ENCODE measurements at regions of chr17 and their contacts with region 1.

Region 1: GRCh38 chr17:79796763-79797491 is at the start of gene CBX8:
- DNase-seq: peak; percentile 99
- H3K4me3 ChIP-seq: peak within 1 kb of the TSS; percentile 41 to 79 (median 43)
- H3K27ac ChIP-seq: peak within 1 kb of the TSS; percentile 36
- H3K4me1 ChIP-seq: peaks cover 19% of the 10 kb centered on the region
- H3K27me3 ChIP-seq: peaks cover 40 to 60% of the 10 kb centered on the region in 2 experiments
- CTCF ChIP-seq: no peak
- POLR2A ChIP-seq: peak; percentile 53
- total RNA-seq, gene CBX8: 3.1 TPM in 2 replicates

Region 2: DNA sequence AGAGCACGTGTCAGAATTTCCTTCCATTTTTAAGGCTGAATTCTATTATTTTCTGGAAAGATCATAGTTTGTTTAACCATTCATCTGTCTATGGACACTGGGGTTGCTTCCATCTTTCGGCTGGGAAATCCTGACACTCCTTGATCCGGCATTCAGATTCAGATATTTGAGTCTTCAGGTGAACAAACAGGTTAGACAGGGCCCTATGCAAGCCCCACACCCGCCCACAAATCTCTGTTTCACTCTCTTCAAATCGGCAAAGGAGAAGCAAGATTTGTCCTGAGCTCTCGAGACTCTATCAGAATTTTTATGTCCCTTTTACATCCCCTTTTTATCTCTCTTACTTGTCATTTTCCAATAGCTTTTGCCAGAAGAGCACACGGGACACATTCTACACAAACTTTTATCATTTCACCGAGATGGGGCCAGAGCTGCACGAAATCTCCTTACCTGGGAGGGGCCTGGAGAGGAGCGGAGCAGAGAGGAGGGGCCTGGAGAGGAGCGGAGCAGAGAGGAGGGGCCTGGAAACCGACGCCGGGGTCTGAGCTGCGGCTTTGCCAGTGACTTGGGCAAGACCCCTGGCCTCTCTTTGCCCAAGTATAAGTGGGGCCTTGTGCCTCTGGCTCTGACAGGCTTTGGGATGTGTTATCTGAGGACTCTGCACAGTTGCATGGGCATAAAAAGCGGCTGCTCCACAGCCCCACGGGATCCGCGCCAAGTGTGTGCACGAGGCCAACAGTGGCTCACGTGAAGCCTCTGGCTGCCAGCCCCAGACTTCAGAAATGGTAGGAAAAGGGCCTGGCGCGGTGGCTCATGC is 131.8 kb before region 1 on chr17:
- CTCF ChIA-PET with region 1: no interaction called
- POLR2A ChIA-PET with region 1: no interaction called
- dilution Hi-C with region 1: no loop called
- intact Hi-C with region 1: no loop called
- DNase-seq: peak; percentile 48
- H3K4me3 ChIP-seq: no peak overlapping the region
- H3K27ac ChIP-seq: no peak overlapping the region
- H3K4me1 ChIP-seq: peaks cover 10% of the 10 kb centered on the region
- H3K27me3 ChIP-seq: peaks cover 0 to 3% of the 10 kb centered on the region in 2 experiments
- CTCF ChIP-seq: no peak
- POLR2A ChIP-seq: no peak

Region 3: GRCh38 chr17:79721993-79722671 is 74.8 kb before region 1 on chr17:
- CTCF ChIA-PET with region 1: no interaction called
- POLR2A ChIA-PET with region 1: no interaction called
- dilution Hi-C with region 1: no loop called
- intact Hi-C with region 1: no loop called
- DNase-seq: no peak
- H3K4me3 ChIP-seq: no peak overlapping the region
- H3K27ac ChIP-seq: no peak overlapping the region
- H3K4me1 ChIP-seq: no peaks in the 10 kb centered on the region
- H3K27me3 ChIP-seq: no peaks in the 10 kb centered on the region
- CTCF ChIP-seq: peak in 1 of 2 donors; percentile 25
- POLR2A ChIP-seq: no peak

Region 4: GRCh38 chr17:79777894-79778503 is 18.9 kb before region 1 on chr17 and contains the start of gene CBX2:
- CTCF ChIA-PET with region 1: interaction called, 3 read pairs
- POLR2A ChIA-PET with region 1: interaction called, 4 read pairs
- dilution Hi-C with region 1: no loop called
- intact Hi-C with region 1: loop called (anchors 1 kb)
- DNase-seq: peak; percentile 58
- H3K4me3 ChIP-seq: peak within 1 kb of the TSS; percentile 67 to 95 (median 69)
- H3K27ac ChIP-seq: no peak within 1 kb of the TSS
- H3K4me1 ChIP-seq: peaks cover 20% of the 10 kb centered on the region
- H3K27me3 ChIP-seq: peaks cover 9 to 10% of the 10 kb centered on the region in 2 experiments
- CTCF ChIP-seq: no peak
- POLR2A ChIP-seq: no peak
- total RNA-seq, gene CBX2: 19.8 and 20.0 TPM in 2 replicates

Region 5: DNA sequence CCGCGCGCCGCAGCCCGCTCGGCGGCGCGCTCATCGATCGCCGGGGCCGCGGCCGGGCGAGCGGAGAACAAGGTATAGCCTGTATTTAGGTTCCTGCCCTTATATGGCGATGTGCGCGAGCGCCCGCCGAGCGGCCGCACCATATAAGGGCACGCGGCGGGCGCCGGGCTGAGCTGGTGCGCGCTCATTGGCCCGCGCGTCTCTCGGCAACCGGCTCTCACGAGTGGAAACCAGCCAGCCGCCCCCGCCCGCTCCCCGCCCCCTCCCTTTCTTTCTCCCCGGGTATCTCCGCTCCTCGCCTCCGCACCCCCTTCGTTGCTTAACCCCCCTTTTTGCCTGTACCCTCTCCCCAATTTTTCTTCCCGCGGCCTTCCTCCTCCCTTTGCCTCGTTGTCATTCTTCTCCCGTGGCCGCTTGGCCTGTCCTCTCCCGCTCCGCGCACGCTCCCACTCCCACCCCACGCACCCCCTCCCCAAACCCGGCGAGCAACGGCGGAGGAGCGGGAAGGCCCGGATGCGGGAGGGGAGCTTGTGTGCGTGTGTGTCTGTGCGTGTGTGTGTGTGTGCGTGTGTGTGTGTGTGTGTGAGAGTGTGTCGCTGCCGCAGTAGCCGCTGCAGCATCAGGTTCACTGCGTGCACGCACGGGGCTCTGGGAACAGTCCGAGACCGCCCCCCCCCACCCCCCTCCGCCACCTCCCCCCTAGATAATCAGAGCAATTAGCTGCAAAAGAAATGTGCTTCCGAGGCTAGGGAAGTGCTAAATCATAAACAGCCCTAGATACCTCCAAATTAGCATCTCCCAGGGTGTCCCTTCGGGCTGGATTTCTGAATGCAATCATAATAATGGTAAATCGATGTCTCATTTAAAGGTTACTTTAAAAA is 13.4 kb after region 1 on chr17:
- CTCF ChIA-PET with region 1: interaction called, 20 read pairs
- POLR2A ChIA-PET with region 1: interaction called, 5 read pairs
- dilution Hi-C with region 1: no loop called
- intact Hi-C with region 1: loop called (anchors 1 kb)
- DNase-seq: peak; percentile 64
- H3K4me3 ChIP-seq: no peak overlapping the region
- H3K27ac ChIP-seq: no peak overlapping the region
- H3K4me1 ChIP-seq: peaks cover 8% of the 10 kb centered on the region
- H3K27me3 ChIP-seq: peaks cover 69 to 82% of the 10 kb centered on the region in 2 experiments
- CTCF ChIP-seq: no peak
- POLR2A ChIP-seq: no peak

Region 6: GRCh38 chr17:79991140-79991923 is 194.4 kb after region 1 on chr17:
- CTCF ChIA-PET with region 1: no interaction called
- POLR2A ChIA-PET with region 1: no interaction called
- dilution Hi-C with region 1: no loop called
- intact Hi-C with region 1: loop called (anchors 2 kb)
- DNase-seq: peak; percentile 70
- H3K4me3 ChIP-seq: peak overlapping the region in 1 of 3 experiments; percentile 14
- H3K27ac ChIP-seq: no peak overlapping the region
- H3K4me1 ChIP-seq: peaks cover 20% of the 10 kb centered on the region
- H3K27me3 ChIP-seq: no peaks in the 10 kb centered on the region
- CTCF ChIP-seq: peak; percentile 24 to 79
- POLR2A ChIP-seq: no peak

Measured in endothelial cell of umbilical vein (primary cell).